Activated CD8-positive, alpha-beta T cell treated with anti-CD3 and anti-CD28 coated beads for 36 hours (primary cell): ENCODE measurements at regions of chr10 and their contacts with region 1.

Region 1: GRCh38 chr10:62816331-62817120 is at the start of gene EGR2:
- DNase-seq: peak; percentile 98
- ATAC-seq: peak; percentile 77
- H3K4me3 Mint-ChIP-seq: peak within 1 kb of the TSS; percentile 97
- H3K27ac Mint-ChIP-seq: peak within 1 kb of the TSS; percentile 100
- H3K4me1 Mint-ChIP-seq: peaks cover 36% of the 10 kb centered on the region
- H3K27me3 Mint-ChIP-seq: peaks cover 20% of the 10 kb centered on the region
- CTCF ChIP-seq: no peak
- total RNA-seq, gene EGR2: 45.6 to 46.6 TPM

Region 2: DNA sequence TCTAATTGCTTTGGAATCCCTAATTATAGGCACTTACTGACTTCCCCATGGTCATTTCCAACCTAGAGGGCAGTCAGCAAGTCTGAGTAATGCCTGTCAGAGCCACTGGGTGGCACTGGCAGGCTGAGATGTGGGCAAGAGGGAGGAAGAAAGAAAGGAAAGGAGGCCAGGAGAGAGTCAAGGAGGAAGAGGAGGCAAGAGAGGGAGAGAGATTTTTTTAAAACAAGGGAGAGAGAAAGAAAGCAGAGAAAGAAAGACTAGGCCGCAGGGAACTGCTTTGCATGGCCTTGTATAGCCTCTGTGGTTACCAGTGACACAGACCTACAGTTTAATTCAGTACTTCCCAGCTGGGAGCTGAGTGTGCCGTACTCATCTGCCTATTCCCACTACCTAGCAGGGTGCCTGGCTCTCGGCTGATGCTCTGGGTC is 222.4 kb before region 1 on chr10:
- CTCF ChIA-PET with region 1: interaction called, 15 read pairs
- POLR2A ChIA-PET with region 1: interaction called, 6 read pairs
- intact Hi-C with region 1: loop called (anchors 5 kb)
- DNase-seq: peak; percentile 65
- ATAC-seq: peak; percentile 84
- H3K4me3 Mint-ChIP-seq: no peak overlapping the region
- H3K27ac Mint-ChIP-seq: peak overlapping the region; percentile 6
- H3K4me1 Mint-ChIP-seq: peaks cover 10% of the 10 kb centered on the region
- H3K27me3 Mint-ChIP-seq: peaks cover 5% of the 10 kb centered on the region
- CTCF ChIP-seq: peak; percentile 98

Region 3: GRCh38 chr10:62637249-62638061 is 179.1 kb before region 1 on chr10:
- CTCF ChIA-PET with region 1: interaction called, 12 read pairs
- POLR2A ChIA-PET with region 1: interaction called, 18 read pairs
- intact Hi-C with region 1: loop called (anchors 1 kb)
- DNase-seq: peak; percentile 90
- ATAC-seq: peak; percentile 93
- H3K4me3 Mint-ChIP-seq: no peak overlapping the region
- H3K27ac Mint-ChIP-seq: no peak overlapping the region
- H3K4me1 Mint-ChIP-seq: peaks cover 25% of the 10 kb centered on the region
- H3K27me3 Mint-ChIP-seq: no peaks in the 10 kb centered on the region
- CTCF ChIP-seq: no peak

Region 4: GRCh38 chr10:62732841-62733653 is 83.5 kb before region 1 on chr10:
- CTCF ChIA-PET with region 1: interaction called, 17 read pairs
- POLR2A ChIA-PET with region 1: interaction called, 46 read pairs
- intact Hi-C with region 1: loop called (anchors 1 kb)
- DNase-seq: peak; percentile 76
- ATAC-seq: peak; percentile 81
- H3K4me3 Mint-ChIP-seq: peak overlapping the region; percentile 49
- H3K27ac Mint-ChIP-seq: no peak overlapping the region
- H3K4me1 Mint-ChIP-seq: peaks cover 21% of the 10 kb centered on the region
- H3K27me3 Mint-ChIP-seq: peaks cover 3% of the 10 kb centered on the region
- CTCF ChIP-seq: no peak

Region 5: DNA sequence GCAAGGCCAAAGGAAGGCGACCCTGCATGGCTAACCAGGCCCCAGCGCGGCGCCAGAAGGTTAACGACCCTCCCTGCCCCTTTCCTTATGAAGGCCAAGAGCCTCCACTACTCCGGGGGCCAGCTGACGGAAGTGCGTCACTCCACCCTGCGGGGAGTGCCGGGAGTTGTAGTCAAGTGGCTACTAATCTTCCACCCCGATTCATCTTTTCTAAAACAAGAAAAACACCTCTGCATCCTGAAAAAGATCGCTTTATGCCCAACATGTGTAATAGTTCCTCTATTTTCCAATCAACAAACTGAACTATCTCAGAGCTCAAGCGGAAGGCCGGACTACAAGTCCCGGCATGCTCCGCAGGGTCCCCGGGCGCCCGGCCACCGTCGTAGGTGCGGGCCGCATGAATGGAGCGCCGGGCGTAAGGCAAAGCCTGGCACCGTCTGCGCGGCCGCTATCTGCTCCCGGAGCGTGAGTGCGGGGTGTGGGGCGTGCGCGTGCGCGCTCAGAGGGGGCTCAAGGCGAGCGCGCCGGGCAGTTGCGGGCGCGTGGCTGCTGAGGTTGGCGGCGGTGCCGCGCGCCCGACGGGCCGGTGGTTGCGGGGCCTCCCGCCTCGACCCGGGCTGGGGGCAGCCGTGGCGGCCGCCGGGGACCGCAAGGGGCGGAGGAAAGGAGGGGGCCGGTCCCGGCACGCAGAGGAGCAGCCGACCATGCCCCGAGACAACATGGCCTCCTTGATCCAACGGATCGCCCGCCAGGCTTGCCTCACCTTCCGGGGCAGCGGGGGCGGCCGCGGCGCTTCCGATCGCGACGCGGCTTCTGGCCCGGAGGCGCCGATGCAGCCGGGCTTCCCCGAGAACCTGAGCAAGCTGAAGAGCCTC is 11.9 kb before region 1 on chr10 and contains the start of gene ADO:
- CTCF ChIA-PET with region 1: interaction called, 14 read pairs
- POLR2A ChIA-PET with region 1: interaction called, 29 read pairs
- intact Hi-C with region 1: no loop called
- DNase-seq: peak; percentile 87
- ATAC-seq: peak; percentile 85
- H3K4me3 Mint-ChIP-seq: peak within 1 kb of the TSS; percentile 84
- H3K27ac Mint-ChIP-seq: peak within 1 kb of the TSS; percentile 99
- H3K4me1 Mint-ChIP-seq: peaks cover 36% of the 10 kb centered on the region
- H3K27me3 Mint-ChIP-seq: no peaks in the 10 kb centered on the region
- CTCF ChIP-seq: no peak
- total RNA-seq, gene ADO: 28.0 to 28.9 TPM

Region 6: DNA sequence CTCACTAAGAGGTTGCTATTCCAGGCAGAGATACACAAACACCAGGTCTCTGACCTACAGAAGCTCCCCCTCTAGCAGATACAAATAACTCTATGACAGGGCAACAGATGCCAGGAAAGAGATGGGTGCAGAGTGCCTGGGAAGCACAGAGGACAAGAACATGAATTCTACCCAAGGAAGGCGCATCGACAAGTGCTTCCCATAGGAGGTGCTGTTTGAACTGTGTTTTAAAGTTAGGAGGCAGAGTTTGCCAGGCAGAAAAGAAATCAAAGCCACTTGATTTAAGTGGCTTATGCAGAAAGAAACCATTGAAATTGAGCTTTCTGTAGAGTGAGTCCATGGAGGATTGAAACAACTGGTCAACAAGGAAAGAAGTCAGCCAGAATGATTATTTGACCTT is 34.9 kb after region 1 on chr10:
- CTCF ChIA-PET with region 1: interaction called, 30 read pairs
- POLR2A ChIA-PET with region 1: interaction called, 33 read pairs
- intact Hi-C with region 1: loop called (anchors 2 kb)
- DNase-seq: peak; percentile 48
- ATAC-seq: no peak
- H3K4me3 Mint-ChIP-seq: no peak overlapping the region
- H3K27ac Mint-ChIP-seq: no peak overlapping the region
- H3K4me1 Mint-ChIP-seq: peaks cover 56% of the 10 kb centered on the region
- H3K27me3 Mint-ChIP-seq: peaks cover 11% of the 10 kb centered on the region
- CTCF ChIP-seq: peak; percentile 63

Region 7: DNA sequence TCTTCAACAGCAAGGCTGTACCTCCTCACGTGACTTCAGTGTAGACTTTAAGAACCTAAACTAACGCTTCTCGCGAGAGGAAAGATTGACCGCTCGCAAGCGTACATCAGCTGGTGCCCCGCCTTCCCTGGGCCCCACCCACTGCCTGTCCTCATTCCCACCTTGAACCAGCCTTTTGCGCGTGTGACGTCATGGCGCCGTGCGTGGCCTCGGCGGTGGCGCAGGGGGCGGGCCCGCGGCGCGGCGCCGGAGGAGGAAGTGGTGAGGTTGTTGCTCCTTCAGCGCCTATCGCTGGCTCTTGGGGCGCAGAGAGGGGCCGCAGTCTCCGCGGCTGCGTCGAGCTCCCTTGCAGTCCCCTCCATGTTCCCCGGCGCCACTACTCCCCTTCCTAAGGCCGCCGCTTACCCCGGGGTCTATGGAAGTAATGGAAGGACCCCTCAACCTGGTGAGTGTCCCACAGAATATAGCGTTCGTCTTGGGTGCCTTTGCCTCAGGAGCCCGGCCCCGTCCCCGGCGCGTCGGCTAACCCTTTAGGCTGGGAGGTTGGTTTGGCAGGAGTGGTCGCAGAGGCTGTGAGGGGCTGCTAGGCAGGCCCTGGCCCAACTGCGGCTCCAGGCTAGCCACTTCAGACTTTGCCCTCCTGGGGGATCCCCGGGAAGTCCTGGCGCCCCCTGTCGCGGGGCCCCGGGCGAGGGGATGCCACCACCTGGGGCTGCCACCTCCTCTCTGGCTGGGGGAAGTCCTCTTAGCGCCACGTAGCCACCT is 316.7 kb after region 1 on chr10 and contains the start of gene NRBF2:
- CTCF ChIA-PET with region 1: interaction called, 13 read pairs
- POLR2A ChIA-PET with region 1: interaction called, 13 read pairs
- intact Hi-C with region 1: no loop called
- DNase-seq: peak; percentile 99
- ATAC-seq: peak; percentile 92
- H3K4me3 Mint-ChIP-seq: peak within 1 kb of the TSS; percentile 91
- H3K27ac Mint-ChIP-seq: peak within 1 kb of the TSS; percentile 94
- H3K4me1 Mint-ChIP-seq: peaks cover 32% of the 10 kb centered on the region
- H3K27me3 Mint-ChIP-seq: no peaks in the 10 kb centered on the region
- CTCF ChIP-seq: no peak
- total RNA-seq, gene NRBF2: 23.1 to 24.1 TPM